GM12878 (cell line): ENCODE measurements at regions of chr11 and their contacts with region 1.

Region 1: GRCh38 chr11:34492806-34493414 is 20.7 kb downstream of the ELF5 start:
- DNase-seq: no peak
- ATAC-seq: peak; percentile 77
- H3K4me3 ChIP-seq: no peak overlapping the region
- H3K27ac ChIP-seq: no peak overlapping the region
- H3K4me1 ChIP-seq: peaks cover 4% of the 10 kb centered on the region; the same call in 1 of the 2 replicates
- H3K27me3 ChIP-seq: no peaks in the 10 kb centered on the region; a peak in 2 of 4 replicates
- CTCF ChIP-seq: peak; percentile 54 to 81 (median 64); a peak in 5 of 6 replicates
- EP300 ChIP-seq: no peak
- POLR2A ChIP-seq: no peak
- RAD21 ChIP-seq: peak; percentile 82

Region 2: GRCh38 chr11:33842236-33842915 is 650.5 kb before region 1 on chr11:
- CTCF ChIA-PET with region 1: no interaction called
- POLR2A ChIA-PET with region 1: no interaction called
- RAD21 ChIA-PET with region 1: no interaction called
- SMC1A ChIA-PET with region 1: no interaction called
- in situ Hi-C with region 1: loop called (anchors 10 kb)
- intact Hi-C with region 1: no loop called
- DNase-seq: no peak
- ATAC-seq: no peak
- H3K4me3 ChIP-seq: no peak overlapping the region
- H3K27ac ChIP-seq: no peak overlapping the region
- H3K4me1 ChIP-seq: no peaks in the 10 kb centered on the region
- H3K27me3 ChIP-seq: peaks cover 0 to 3% of the 10 kb centered on the region in 2 experiments; a peak in 1 of 4 replicates
- CTCF ChIP-seq: no peak
- EP300 ChIP-seq: no peak
- POLR2A ChIP-seq: no peak
- RAD21 ChIP-seq: no peak

Region 3: DNA sequence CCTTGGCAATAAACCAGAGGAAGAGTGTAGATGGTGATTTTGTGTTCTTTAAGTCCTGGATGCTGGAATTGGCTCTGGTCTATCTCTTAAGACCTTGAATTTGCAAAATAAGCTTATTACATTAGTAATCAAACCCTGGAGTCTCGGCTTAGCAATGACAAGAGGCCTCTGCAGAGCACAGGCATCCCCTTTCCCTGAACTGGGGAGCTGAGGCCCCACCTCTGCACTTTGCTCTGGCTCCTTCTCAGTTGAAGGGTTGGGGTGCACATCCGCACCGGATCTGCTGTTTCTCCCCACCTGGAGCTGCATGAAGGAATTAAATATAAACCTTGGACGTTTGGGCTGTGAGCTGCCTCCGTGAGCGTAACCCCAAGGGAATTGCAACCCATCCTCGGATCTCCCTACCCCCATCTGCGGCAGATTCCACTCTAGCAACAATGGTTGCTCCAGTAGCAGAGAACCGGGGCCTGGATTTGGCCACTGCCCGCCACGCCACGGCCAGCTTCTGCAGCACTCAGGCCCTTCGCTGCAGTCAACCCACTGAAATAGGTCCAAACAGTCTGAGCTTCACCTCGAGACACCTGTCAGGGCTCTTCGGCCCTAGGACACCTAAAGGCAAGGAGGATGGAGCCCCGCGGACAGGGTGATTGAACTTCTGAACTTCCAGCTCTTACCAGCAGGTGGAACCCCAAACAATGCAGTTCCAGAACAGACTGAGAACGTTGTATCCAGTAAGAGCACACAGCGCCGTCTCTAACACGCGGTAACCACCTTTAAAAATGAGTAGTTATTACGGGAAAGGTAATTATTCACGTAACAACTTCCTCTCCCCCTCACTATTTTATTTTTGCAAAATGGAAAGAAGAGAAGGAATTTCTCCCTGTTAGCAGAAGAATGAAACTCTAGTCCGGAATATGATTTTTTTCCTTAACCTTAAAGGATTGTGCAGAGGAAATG is 496.1 kb before region 1 on chr11:
- CTCF ChIA-PET with region 1: no interaction called
- POLR2A ChIA-PET with region 1: no interaction called
- RAD21 ChIA-PET with region 1: interaction called, 3 read pairs
- SMC1A ChIA-PET with region 1: no interaction called
- in situ Hi-C with region 1: no loop called
- intact Hi-C with region 1: loop called (anchors 5 kb)
- DNase-seq: peak; percentile 49
- ATAC-seq: peak; percentile 96
- H3K4me3 ChIP-seq: no peak overlapping the region; the same call in 1 of the 2 replicates
- H3K27ac ChIP-seq: no peak overlapping the region
- H3K4me1 ChIP-seq: peaks cover 25% of the 10 kb centered on the region
- H3K27me3 ChIP-seq: peaks cover 3 to 5% of the 10 kb centered on the region in 2 experiments; a peak in 3 of 4 replicates
- CTCF ChIP-seq: peak; percentile 82 to 89 (median 84); a peak in 5 of 6 replicates
- EP300 ChIP-seq: no peak
- POLR2A ChIP-seq: no peak
- RAD21 ChIP-seq: peak; percentile 87

Region 4: DNA sequence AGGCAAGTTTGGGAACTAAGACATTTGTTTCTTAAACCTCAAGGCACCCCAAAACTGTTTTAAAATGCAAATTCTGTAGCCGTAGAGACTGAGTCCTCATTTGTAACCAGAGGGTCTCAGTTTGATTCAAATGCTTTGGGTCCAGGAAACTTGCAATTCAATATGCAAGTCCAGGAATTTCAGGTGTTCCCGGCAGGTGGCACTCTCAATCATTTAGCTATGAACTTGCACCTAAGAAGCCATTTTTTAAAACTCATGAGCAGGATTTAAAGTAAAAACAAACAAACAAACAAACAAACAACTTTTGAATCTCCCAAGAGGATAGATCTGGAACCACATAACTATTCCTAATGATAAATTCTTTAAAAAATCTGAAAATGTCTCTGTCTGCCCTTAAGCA is 126.4 kb before region 1 on chr11:
- CTCF ChIA-PET with region 1: interaction called, 177 read pairs
- POLR2A ChIA-PET with region 1: no interaction called
- RAD21 ChIA-PET with region 1: interaction called, 17 read pairs
- SMC1A ChIA-PET with region 1: interaction called, 34 read pairs
- in situ Hi-C with region 1: loop called (anchors 5 kb)
- intact Hi-C with region 1: loop called (anchors 1 kb)
- DNase-seq: no peak
- ATAC-seq: no peak
- H3K4me3 ChIP-seq: no peak overlapping the region
- H3K27ac ChIP-seq: no peak overlapping the region
- H3K4me1 ChIP-seq: no peaks in the 10 kb centered on the region
- H3K27me3 ChIP-seq: no peaks in the 10 kb centered on the region
- CTCF ChIP-seq: peak; percentile 45 to 55 (median 50); a peak in 5 of 6 replicates
- EP300 ChIP-seq: no peak
- POLR2A ChIP-seq: no peak
- RAD21 ChIP-seq: peak; percentile 56

Region 5: GRCh38 chr11:34468209-34468841 is 24.6 kb before region 1 on chr11:
- CTCF ChIA-PET with region 1: interaction called, 12 read pairs
- POLR2A ChIA-PET with region 1: no interaction called
- RAD21 ChIA-PET with region 1: interaction called, 3 read pairs
- SMC1A ChIA-PET with region 1: interaction called, 3 read pairs
- in situ Hi-C with region 1: no loop called
- intact Hi-C with region 1: no loop called
- DNase-seq: no peak
- ATAC-seq: peak; percentile 62
- H3K4me3 ChIP-seq: no peak overlapping the region
- H3K27ac ChIP-seq: no peak overlapping the region
- H3K4me1 ChIP-seq: no peaks in the 10 kb centered on the region
- H3K27me3 ChIP-seq: no peaks in the 10 kb centered on the region
- CTCF ChIP-seq: peak; percentile 55 to 73 (median 67)
- EP300 ChIP-seq: no peak
- POLR2A ChIP-seq: no peak
- RAD21 ChIP-seq: peak; percentile 67

Region 6: GRCh38 chr11:34599406-34599901 is 106.5 kb after region 1 on chr11:
- CTCF ChIA-PET with region 1: no interaction called
- POLR2A ChIA-PET with region 1: no interaction called
- RAD21 ChIA-PET with region 1: no interaction called
- SMC1A ChIA-PET with region 1: no interaction called
- in situ Hi-C with region 1: no loop called
- intact Hi-C with region 1: no loop called
- DNase-seq: no peak
- ATAC-seq: no peak
- H3K4me3 ChIP-seq: no peak overlapping the region
- H3K27ac ChIP-seq: no peak overlapping the region
- H3K4me1 ChIP-seq: no peaks in the 10 kb centered on the region; the same call in 1 of the 2 replicates
- H3K27me3 ChIP-seq: peaks cover 0 to 6% of the 10 kb centered on the region in 2 experiments
- CTCF ChIP-seq: no peak
- EP300 ChIP-seq: no peak
- POLR2A ChIP-seq: no peak
- RAD21 ChIP-seq: no peak